ENCODE measurements at regions of chr11 and their contacts with region 1.

Region 1: DNA sequence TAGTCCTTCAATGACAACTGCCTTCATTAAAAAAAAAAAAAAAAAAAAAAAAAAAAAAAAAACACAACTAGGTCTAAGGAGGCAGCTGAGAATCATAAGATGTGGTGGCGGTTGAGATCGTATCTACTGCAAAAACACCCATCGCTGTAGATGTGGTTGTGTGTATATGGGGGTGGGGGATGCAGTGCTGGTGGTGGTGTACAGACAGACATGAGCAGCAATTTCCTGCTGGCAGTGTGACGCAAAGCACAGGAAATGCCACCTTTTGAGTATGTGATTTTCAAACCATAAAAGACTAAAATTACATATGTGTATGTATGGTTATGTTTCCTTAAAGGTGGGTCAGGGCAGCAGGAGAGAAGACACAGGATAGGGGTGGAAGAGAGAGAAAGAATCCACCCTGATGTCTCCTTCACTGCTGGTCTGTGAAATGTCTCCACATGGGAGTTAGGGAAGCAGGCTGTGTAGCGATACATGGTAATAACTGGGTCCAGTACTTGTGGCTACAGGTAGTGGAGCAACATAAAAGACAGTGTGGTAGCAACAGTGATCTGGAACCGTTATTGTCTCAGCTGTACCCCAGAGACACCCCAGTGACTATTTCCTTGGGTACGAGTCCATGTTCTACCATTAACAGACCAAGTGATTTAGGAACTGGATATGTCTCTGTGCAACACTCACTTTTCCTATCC is 57.9 kb downstream of the SYTL2 start:
- DNase-seq: peak; percentile 59 to 98 (median 92)
- ATAC-seq: peak; percentile 90 to 94 (median 93)
- H3K4me3 ChIP-seq: peak overlapping the region in 1 of 2 donors; percentile 15
- H3K4me3 Mint-ChIP-seq: peak overlapping the region; percentile 63 to 81 (median 75)
- H3K27ac ChIP-seq: peak overlapping the region; percentile 85
- H3K27ac Mint-ChIP-seq: peak overlapping the region; percentile 88 to 92
- H3K4me1 ChIP-seq: peaks cover 76 to 81% of the 10 kb centered on the region in 2 experiments
- H3K4me1 Mint-ChIP-seq: peaks cover 89 to 97% (median 93%) of the 10 kb centered on the region in 3 donors
- H3K27me3 ChIP-seq: no peaks in the 10 kb centered on the region
- H3K27me3 Mint-ChIP-seq: no peaks in the 10 kb centered on the region

Region 2: DNA sequence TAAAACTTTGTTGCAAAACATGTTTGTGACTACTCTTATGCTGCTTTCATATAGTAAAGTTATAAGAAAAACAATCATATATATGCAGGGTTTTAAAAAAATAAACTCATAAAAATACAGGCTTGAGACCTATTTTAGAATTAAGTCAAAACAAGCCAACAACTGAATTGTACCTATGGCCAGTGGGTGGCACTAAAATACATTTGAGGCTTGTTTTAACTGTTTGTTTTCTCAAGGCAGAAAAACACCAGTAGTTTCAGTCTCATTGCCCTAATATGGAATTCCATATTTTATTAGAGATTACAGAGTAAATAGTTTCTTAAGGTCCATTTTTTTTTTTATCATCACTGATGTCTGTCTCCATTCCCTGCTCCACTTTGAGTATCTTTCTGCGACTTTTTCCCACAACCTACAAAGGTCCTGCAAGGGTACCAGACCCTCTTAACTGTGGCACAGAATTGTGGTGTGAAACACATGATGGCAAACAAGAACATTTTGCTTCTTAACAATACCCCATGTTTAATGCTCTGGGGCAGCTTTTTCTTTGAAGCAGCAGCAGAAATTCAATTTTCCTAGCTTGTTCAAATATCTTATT is 58.6 kb before region 1 on chr11:
- CTCF ChIA-PET with region 1: interaction called, 8 to 13 read pairs
- POLR2A ChIA-PET with region 1: interaction called in 1 of 2 experiments, 4 read pairs
- DNase-seq: peak in 18 of 35 experiments; percentile 5 to 67 (median 19)
- ATAC-seq: peak in 1 of 4 experiments; percentile 59
- H3K4me3 ChIP-seq: no peak overlapping the region
- H3K4me3 Mint-ChIP-seq: no peak overlapping the region
- H3K27ac ChIP-seq: no peak overlapping the region
- H3K27ac Mint-ChIP-seq: no peak overlapping the region
- H3K4me1 ChIP-seq: peaks cover 0 to 2% of the 10 kb centered on the region in 2 experiments
- H3K4me1 Mint-ChIP-seq: peaks cover 8 to 22% (median 18%) of the 10 kb centered on the region in 3 donors
- H3K27me3 ChIP-seq: no peaks in the 10 kb centered on the region
- H3K27me3 Mint-ChIP-seq: no peaks in the 10 kb centered on the region

Region 3: DNA sequence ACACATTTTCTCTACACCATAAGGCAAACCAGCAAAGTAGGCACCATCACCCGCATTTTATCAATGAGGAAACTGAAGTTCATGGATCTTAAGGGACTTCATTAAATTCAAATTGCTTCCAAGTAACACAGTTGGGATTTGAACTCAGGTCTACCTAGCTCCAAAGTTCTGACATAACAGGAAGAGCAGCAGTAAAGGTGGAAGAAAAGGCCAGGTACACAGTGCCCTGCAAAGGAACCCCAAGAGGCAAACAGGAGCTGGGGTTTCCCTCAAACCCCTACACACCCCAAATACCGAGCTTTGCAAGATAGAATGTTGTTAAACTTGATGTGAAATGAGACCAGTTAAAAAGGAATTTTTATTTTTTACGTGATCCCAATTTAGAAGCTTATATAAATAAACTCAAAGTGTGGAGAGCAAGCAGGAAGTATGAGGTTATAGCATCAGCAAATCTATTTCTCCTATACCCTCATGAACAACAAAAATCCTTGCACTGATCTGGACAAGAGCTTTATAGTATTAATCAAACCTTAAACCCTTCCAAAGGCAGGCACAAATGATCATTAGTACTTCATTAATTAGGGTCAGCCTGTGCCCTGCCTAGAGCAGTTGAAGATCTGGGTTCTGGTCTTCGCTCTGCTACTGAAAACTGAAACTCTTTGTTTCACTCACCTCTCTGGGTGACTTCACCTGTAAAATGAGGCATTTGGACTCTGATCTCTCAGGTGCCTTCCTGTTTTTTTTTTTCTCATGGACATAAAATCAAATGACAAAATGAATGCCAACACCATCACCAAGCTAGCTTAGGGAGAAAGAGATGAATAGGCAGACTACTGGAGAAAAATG is 21.4 kb after region 1 on chr11:
- CTCF ChIA-PET with region 1: no interaction called
- POLR2A ChIA-PET with region 1: interaction called in 1 of 2 experiments, 23 read pairs
- DNase-seq: no peak
- ATAC-seq: peak in 2 of 4 experiments; percentile 47 to 61
- H3K4me3 ChIP-seq: no peak overlapping the region
- H3K4me3 Mint-ChIP-seq: peak overlapping the region in 2 of 3 donors; percentile 9 to 19
- H3K27ac ChIP-seq: peak overlapping the region; percentile 3
- H3K27ac Mint-ChIP-seq: peak overlapping the region; percentile 69 to 81
- H3K4me1 ChIP-seq: peaks cover 0 to 6% of the 10 kb centered on the region in 2 experiments
- H3K4me1 Mint-ChIP-seq: peaks cover 37 to 49% (median 38%) of the 10 kb centered on the region in 3 donors
- H3K27me3 ChIP-seq: no peaks in the 10 kb centered on the region
- H3K27me3 Mint-ChIP-seq: no peaks in the 10 kb centered on the region